T-cell (primary cell): ENCODE measurements at regions of chr16 and their contacts with region 1.

Region 1: GRCh38 chr16:20938426-20938825 is 37.9 kb downstream of the LYRM1 start:
- DNase-seq: no peak
- ATAC-seq: no peak
- H3K4me3 ChIP-seq: no peak overlapping the region
- H3K4me3 Mint-ChIP-seq: no peak overlapping the region
- H3K27ac ChIP-seq: no peak overlapping the region
- H3K27ac Mint-ChIP-seq: no peak overlapping the region
- H3K4me1 ChIP-seq: no peaks in the 10 kb centered on the region
- H3K4me1 Mint-ChIP-seq: peaks cover 5 to 9% (median 8%) of the 10 kb centered on the region in 3 donors
- H3K27me3 ChIP-seq: peaks cover 0 to 6% of the 10 kb centered on the region in 2 experiments
- H3K27me3 Mint-ChIP-seq: no peaks in the 10 kb centered on the region

Region 2: DNA sequence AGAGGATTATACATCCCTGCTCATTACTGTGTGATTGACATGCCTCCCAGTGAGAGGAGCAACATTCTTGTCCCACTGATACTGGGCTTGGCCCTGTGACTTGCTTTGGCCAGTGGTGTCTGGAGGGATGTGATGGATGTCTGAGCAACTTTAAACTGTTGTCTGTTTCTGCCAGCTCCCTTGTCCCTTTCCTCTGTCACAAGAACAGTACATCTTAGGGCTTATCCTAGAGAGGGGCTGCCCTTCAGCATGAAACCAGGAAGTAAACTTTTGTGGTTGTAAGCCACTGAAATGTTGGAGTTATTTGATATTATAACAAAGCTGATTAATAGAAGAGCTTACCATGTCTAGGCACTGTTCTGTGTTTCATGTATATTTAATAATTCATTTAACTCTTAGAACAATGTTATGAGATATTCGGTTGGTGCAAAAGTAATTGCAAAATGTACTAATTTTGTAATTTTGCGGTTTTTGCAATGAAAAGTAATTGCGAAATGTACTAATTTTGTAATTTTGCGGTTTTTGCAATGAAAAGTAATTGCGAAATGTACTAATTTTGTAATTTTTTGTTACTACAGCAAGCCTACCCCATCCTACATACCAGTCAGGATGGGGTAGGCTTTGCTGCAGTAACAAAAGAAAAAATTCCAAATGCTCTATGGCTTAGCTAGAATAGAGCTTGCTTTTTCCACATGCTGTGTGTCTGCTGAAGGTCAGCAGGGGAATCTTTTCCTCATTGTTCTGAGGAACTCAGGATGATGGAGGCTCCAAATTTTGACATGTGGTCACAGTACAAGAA is 970.7 kb before region 1 on chr16:
- CTCF ChIA-PET with region 1: interaction called in 1 of 2 experiments, 11 read pairs
- POLR2A ChIA-PET with region 1: no interaction called
- DNase-seq: no peak
- ATAC-seq: no peak
- H3K4me3 ChIP-seq: no peak overlapping the region
- H3K4me3 Mint-ChIP-seq: no peak overlapping the region
- H3K27ac ChIP-seq: no peak overlapping the region
- H3K27ac Mint-ChIP-seq: no peak overlapping the region
- H3K4me1 ChIP-seq: no peaks in the 10 kb centered on the region
- H3K4me1 Mint-ChIP-seq: no peaks in the 10 kb centered on the region
- H3K27me3 ChIP-seq: peaks cover 0 to 7% of the 10 kb centered on the region in 2 experiments
- H3K27me3 Mint-ChIP-seq: peaks cover 3 to 13% of the 10 kb centered on the region in 2 donors

Region 3: GRCh38 chr16:20952159-20952920 is 13.9 kb after region 1 on chr16:
- CTCF ChIA-PET with region 1: interaction called in 1 of 2 experiments, 12 read pairs
- POLR2A ChIA-PET with region 1: interaction called in 1 of 2 experiments, 6 read pairs
- DNase-seq: no peak
- ATAC-seq: no peak
- H3K4me3 ChIP-seq: no peak overlapping the region
- H3K4me3 Mint-ChIP-seq: no peak overlapping the region
- H3K27ac ChIP-seq: no peak overlapping the region
- H3K27ac Mint-ChIP-seq: no peak overlapping the region
- H3K4me1 ChIP-seq: no peaks in the 10 kb centered on the region
- H3K4me1 Mint-ChIP-seq: no peaks in the 10 kb centered on the region
- H3K27me3 ChIP-seq: peaks cover 0 to 17% of the 10 kb centered on the region in 2 experiments
- H3K27me3 Mint-ChIP-seq: no peaks in the 10 kb centered on the region

Region 4: DNA sequence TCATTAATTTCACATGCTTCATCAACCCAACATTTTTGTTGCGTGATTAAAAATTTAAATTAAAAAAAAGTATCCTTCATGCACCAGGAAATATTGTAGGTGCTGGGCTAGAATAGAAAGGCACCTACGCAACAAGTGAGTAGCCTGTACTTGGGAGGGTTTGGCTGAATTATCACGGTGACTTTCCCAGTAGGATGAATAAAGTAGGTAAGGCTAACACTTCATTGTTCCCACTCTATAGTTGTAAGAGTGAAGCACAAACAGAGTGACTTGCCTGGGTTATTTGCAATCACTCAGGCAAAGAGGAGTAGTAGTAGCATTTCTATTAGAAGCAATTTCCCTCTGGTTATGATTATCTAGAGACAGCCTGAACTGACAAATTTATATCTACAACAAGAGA is 149.7 kb after region 1 on chr16:
- CTCF ChIA-PET with region 1: no interaction called
- POLR2A ChIA-PET with region 1: no interaction called
- DNase-seq: no peak
- ATAC-seq: no peak
- H3K4me3 ChIP-seq: no peak overlapping the region
- H3K4me3 Mint-ChIP-seq: no peak overlapping the region
- H3K27ac ChIP-seq: no peak overlapping the region
- H3K27ac Mint-ChIP-seq: no peak overlapping the region
- H3K4me1 ChIP-seq: no peaks in the 10 kb centered on the region
- H3K4me1 Mint-ChIP-seq: no peaks in the 10 kb centered on the region
- H3K27me3 ChIP-seq: peaks cover 0 to 15% of the 10 kb centered on the region in 2 experiments
- H3K27me3 Mint-ChIP-seq: peaks cover 21 to 42% of the 10 kb centered on the region in 2 donors

Region 5: DNA sequence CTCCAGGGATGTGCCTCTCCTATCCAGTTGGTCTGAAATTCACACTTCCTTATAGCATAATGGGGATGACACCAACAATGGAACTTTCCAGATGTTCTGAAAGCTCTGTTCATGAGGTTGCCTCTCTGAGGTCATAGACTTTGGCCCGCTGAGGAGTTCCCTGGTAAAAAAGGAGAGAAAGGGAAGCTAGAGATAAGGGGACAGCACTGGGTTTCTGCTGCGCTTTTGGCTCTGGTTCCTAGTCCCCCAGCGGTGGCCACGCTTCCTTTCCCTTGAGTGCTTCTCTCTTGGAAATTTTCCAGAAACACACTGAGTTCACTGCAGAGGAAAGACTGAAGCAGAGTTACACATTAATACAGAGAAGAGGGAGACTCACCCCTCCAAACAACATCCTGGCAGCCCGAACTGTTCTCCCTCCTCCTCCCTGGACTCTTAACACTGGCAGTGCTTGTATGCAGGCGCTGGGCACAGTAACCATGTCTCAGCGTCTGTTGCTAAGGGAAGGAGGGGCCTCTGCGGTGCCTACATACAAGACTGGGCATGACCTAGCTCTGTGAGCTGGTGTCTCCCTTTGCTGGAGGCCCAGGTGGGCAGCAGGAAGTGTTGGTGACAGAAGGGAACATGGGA is 212.1 kb after region 1 on chr16 and contains the start of gene DNAH3:
- CTCF ChIA-PET with region 1: no interaction called
- POLR2A ChIA-PET with region 1: no interaction called
- DNase-seq: no peak
- ATAC-seq: no peak
- H3K4me3 ChIP-seq: no peak within 1 kb of the TSS
- H3K4me3 Mint-ChIP-seq: no peak within 1 kb of the TSS
- H3K27ac ChIP-seq: no peak within 1 kb of the TSS
- H3K27ac Mint-ChIP-seq: no peak within 1 kb of the TSS
- H3K4me1 ChIP-seq: no peaks in the 10 kb centered on the region
- H3K4me1 Mint-ChIP-seq: no peaks in the 10 kb centered on the region
- H3K27me3 ChIP-seq: peaks cover 0 to 21% of the 10 kb centered on the region in 2 experiments
- H3K27me3 Mint-ChIP-seq: peaks cover 21 to 44% of the 10 kb centered on the region in 2 donors
- total RNA-seq, gene DNAH3: not detected